ENCODE measurements at regions of chr6 and their contacts with region 1.

Region 1: GRCh38 chr6:116268589-116269293 is 11.0 kb downstream of the TSPYL1 start:
- DNase-seq: no peak
- ATAC-seq: peak; percentile 81
- H3K4me3 Mint-ChIP-seq: no peak overlapping the region
- H3K27ac Mint-ChIP-seq: peak overlapping the region; percentile 61; the same call in 1 of the 2 replicates
- H3K4me1 Mint-ChIP-seq: peaks cover 30% of the 10 kb centered on the region
- H3K27me3 Mint-ChIP-seq: no peaks in the 10 kb centered on the region
- CTCF ChIP-seq: peak; percentile 76

Region 2: GRCh38 chr6:116034327-116034726 is 234.4 kb before region 1 on chr6:
- CTCF ChIA-PET with region 1: no interaction called
- POLR2A ChIA-PET with region 1: no interaction called
- DNase-seq: no peak
- ATAC-seq: no peak
- H3K4me3 Mint-ChIP-seq: no peak overlapping the region
- H3K27ac Mint-ChIP-seq: no peak overlapping the region
- H3K4me1 Mint-ChIP-seq: peaks cover 9% of the 10 kb centered on the region
- H3K27me3 Mint-ChIP-seq: no peaks in the 10 kb centered on the region
- CTCF ChIP-seq: no peak

Region 3: GRCh38 chr6:116200619-116201249 is 68.0 kb before region 1 on chr6:
- CTCF ChIA-PET with region 1: no interaction called
- POLR2A ChIA-PET with region 1: no interaction called
- DNase-seq: no peak
- ATAC-seq: no peak
- H3K4me3 Mint-ChIP-seq: no peak overlapping the region
- H3K27ac Mint-ChIP-seq: no peak overlapping the region
- H3K4me1 Mint-ChIP-seq: no peaks in the 10 kb centered on the region
- H3K27me3 Mint-ChIP-seq: no peaks in the 10 kb centered on the region
- CTCF ChIP-seq: no peak

Region 4: GRCh38 chr6:116217069-116217468 is 51.7 kb before region 1 on chr6:
- CTCF ChIA-PET with region 1: interaction called, 14 read pairs
- POLR2A ChIA-PET with region 1: no interaction called
- DNase-seq: no peak
- ATAC-seq: peak; percentile 63
- H3K4me3 Mint-ChIP-seq: no peak overlapping the region
- H3K27ac Mint-ChIP-seq: no peak overlapping the region
- H3K4me1 Mint-ChIP-seq: no peaks in the 10 kb centered on the region
- H3K27me3 Mint-ChIP-seq: no peaks in the 10 kb centered on the region
- CTCF ChIP-seq: peak; percentile 52

Region 5: DNA sequence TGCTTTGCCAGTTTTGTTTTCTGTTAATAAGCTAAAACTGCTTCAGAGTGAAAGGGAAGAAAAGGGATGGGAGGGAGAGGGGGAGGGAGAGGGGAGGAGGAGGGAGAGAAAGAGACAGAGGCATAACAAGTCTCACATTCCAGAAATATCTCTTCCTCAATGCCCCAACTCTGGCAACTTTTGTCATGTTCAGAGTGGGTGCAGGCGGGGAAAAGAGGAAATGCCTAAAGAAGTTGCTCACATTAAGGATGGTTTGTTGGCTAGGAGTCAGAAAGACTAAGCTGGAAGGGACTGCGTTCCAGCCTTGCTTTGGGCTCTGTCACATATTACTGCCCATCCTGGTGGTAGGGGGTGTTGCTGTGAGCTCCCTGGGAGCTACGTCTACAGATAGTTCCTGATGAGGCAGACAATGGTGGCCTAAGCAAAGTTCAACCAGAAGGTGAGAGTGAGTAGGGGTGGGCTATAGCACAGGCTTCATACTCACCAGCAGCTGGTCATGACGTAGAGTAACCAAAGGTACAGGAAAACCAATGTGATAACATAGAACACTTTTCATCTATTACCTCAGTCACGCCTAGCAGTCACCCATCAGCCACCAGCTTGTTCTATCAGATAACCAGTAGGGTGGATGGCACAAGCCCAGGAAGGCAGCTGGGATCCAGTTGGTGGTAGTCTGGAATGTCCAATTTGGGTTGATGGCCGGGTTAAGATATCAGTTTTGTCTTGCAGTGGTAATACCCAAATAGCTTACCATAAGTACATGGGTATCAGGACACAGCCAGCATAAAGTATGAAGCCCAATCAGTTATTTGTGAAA is 17.0 kb before region 1 on chr6:
- CTCF ChIA-PET with region 1: interaction called, 12 read pairs
- POLR2A ChIA-PET with region 1: interaction called, 4 read pairs
- DNase-seq: no peak
- ATAC-seq: peak; percentile 5
- H3K4me3 Mint-ChIP-seq: peak overlapping the region; percentile 62
- H3K27ac Mint-ChIP-seq: peak overlapping the region; percentile 91
- H3K4me1 Mint-ChIP-seq: peaks cover 27% of the 10 kb centered on the region; the same call in 1 of the 2 replicates
- H3K27me3 Mint-ChIP-seq: no peaks in the 10 kb centered on the region
- CTCF ChIP-seq: no peak

Region 6: DNA sequence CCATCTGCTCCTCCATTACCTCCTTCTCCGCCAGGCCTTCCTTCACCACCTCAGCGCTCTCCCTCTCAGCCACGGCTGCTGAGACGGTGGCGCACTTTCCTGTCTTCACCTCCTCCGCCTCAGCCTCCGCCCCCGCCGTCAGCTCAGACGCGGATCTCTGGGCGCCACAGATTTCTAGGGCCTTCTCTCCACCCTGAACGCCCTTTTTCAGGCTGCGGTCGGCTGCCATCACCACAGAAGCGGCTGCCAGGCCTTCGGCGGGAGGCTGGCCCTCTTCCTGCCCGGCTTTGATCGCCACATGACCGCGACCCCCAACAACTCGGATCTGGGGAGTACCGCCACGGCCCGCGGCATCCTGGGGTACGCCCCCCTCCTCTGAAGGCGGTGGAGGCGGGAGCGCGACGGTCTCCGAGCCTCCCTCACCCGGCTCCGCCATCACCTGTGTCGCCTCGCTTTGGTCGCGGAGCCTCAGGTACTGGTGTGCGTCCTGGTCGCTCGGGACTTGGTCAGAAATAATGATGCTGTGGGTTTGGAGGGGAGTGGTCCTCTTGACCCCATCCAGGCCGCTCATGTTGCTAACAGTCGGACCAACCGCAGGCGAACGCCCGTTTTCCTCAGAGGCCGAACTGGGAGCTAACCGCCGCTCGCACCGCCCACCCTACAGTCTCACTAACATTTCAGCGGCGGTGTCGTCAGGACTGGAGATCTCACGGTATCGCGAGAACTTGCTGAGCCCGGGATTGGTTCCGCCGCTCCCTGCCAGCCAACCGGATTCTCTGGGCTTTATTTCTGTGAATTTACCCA is 10.7 kb after region 1 on chr6 and contains the start of gene TSPYL1:
- CTCF ChIA-PET with region 1: interaction called, 38 read pairs
- POLR2A ChIA-PET with region 1: interaction called, 13 read pairs
- DNase-seq: peak; percentile 95
- ATAC-seq: peak; percentile 97
- H3K4me3 Mint-ChIP-seq: peak within 1 kb of the TSS; percentile 96
- H3K27ac Mint-ChIP-seq: peak within 1 kb of the TSS; percentile 100
- H3K4me1 Mint-ChIP-seq: peaks cover 55% of the 10 kb centered on the region
- H3K27me3 Mint-ChIP-seq: no peaks in the 10 kb centered on the region
- CTCF ChIP-seq: no peak
- total RNA-seq, gene TSPYL1: 62.4 to 68.6 TPM (median 64.3 TPM) in 3 replicates

Region 7: GRCh38 chr6:116531675-116532570 is 263.2 kb after region 1 on chr6:
- CTCF ChIA-PET with region 1: interaction called, 39 read pairs
- POLR2A ChIA-PET with region 1: no interaction called
- DNase-seq: peak; percentile 79
- ATAC-seq: peak; percentile 75
- H3K4me3 Mint-ChIP-seq: no peak overlapping the region
- H3K27ac Mint-ChIP-seq: no peak overlapping the region
- H3K4me1 Mint-ChIP-seq: peaks cover 49% of the 10 kb centered on the region
- H3K27me3 Mint-ChIP-seq: no peaks in the 10 kb centered on the region
- CTCF ChIP-seq: peak; percentile 55

Region 8: GRCh38 chr6:116570856-116571682 is 302.3 kb after region 1 on chr6 and contains the start of gene RWDD1:
- CTCF ChIA-PET with region 1: interaction called, 19 read pairs
- POLR2A ChIA-PET with region 1: interaction called, 4 read pairs
- DNase-seq: peak; percentile 99
- ATAC-seq: peak; percentile 98
- H3K4me3 Mint-ChIP-seq: peak within 1 kb of the TSS; percentile 98
- H3K27ac Mint-ChIP-seq: peak within 1 kb of the TSS; percentile 100
- H3K4me1 Mint-ChIP-seq: peaks cover 14% of the 10 kb centered on the region
- H3K27me3 Mint-ChIP-seq: no peaks in the 10 kb centered on the region; the same call in 1 of the 2 replicates
- CTCF ChIP-seq: no peak
- total RNA-seq, gene RWDD1: 26.2 to 33.8 TPM (median 28.3 TPM) in 3 replicates